ENCODE measurements at regions of chr3 and their contacts with region 1.

Region 1: DNA sequence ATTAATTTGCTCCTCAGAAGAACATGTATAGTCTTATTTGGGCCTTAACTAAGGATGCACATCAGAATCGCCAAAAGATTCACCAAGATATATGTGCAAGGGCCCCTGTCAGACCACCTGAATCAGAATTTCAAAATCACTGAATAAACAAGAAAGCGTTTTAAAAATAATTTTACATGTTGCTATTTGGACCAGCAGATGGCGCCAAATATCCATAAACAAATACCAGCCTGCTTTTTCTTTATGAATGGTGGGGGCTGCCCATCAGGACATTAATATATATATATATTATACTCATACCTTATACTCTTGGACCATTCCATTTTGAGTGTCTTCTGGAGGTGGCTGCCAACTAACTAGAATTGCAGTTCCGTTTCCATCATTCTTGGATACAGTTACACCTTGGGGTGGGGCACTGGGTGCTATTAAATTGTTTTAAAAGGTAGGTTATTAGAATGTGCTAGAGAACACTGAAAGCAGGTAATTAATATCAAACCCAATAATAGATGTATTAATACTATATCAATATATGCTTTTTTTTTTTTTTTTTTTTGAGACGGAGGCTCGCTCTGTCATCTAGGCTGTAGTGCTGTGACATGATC is 1108.3 kb downstream of the ROBO1 start:
- DNase-seq: peak in 4 of 14 experiments; percentile 4 to 31 (median 12)
- ATAC-seq: no peak
- H3K4me3 ChIP-seq: no peak overlapping the region
- H3K4me3 Mint-ChIP-seq: no peak overlapping the region
- H3K27ac ChIP-seq: no peak overlapping the region
- H3K27ac Mint-ChIP-seq: no peak overlapping the region
- H3K4me1 ChIP-seq: no peaks in the 10 kb centered on the region
- H3K4me1 Mint-ChIP-seq: no peaks in the 10 kb centered on the region
- H3K27me3 ChIP-seq: no peaks in the 10 kb centered on the region
- H3K27me3 Mint-ChIP-seq: no peaks in the 10 kb centered on the region
- CTCF ChIP-seq: peak; percentile 69

Region 2: GRCh38 chr3:78507196-78507984 is 152.1 kb before region 1 on chr3:
- CTCF ChIA-PET with region 1: no interaction called
- POLR2A ChIA-PET with region 1: no interaction called
- intact Hi-C with region 1: no loop called
- DNase-seq: no peak
- ATAC-seq: no peak
- H3K4me3 ChIP-seq: no peak overlapping the region
- H3K4me3 Mint-ChIP-seq: no peak overlapping the region
- H3K27ac ChIP-seq: no peak overlapping the region
- H3K27ac Mint-ChIP-seq: no peak overlapping the region
- H3K4me1 ChIP-seq: no peaks in the 10 kb centered on the region
- H3K4me1 Mint-ChIP-seq: no peaks in the 10 kb centered on the region
- H3K27me3 ChIP-seq: no peaks in the 10 kb centered on the region
- H3K27me3 Mint-ChIP-seq: no peaks in the 10 kb centered on the region
- CTCF ChIP-seq: no peak

Region 3: GRCh38 chr3:78670746-78671145 is 11.3 kb after region 1 on chr3:
- CTCF ChIA-PET with region 1: no interaction called
- POLR2A ChIA-PET with region 1: no interaction called
- intact Hi-C with region 1: no loop called
- DNase-seq: no peak
- ATAC-seq: no peak
- H3K4me3 ChIP-seq: no peak overlapping the region
- H3K4me3 Mint-ChIP-seq: no peak overlapping the region
- H3K27ac ChIP-seq: no peak overlapping the region
- H3K27ac Mint-ChIP-seq: no peak overlapping the region
- H3K4me1 ChIP-seq: no peaks in the 10 kb centered on the region
- H3K4me1 Mint-ChIP-seq: no peaks in the 10 kb centered on the region
- H3K27me3 ChIP-seq: no peaks in the 10 kb centered on the region
- H3K27me3 Mint-ChIP-seq: no peaks in the 10 kb centered on the region
- CTCF ChIP-seq: no peak

Region 4: DNA sequence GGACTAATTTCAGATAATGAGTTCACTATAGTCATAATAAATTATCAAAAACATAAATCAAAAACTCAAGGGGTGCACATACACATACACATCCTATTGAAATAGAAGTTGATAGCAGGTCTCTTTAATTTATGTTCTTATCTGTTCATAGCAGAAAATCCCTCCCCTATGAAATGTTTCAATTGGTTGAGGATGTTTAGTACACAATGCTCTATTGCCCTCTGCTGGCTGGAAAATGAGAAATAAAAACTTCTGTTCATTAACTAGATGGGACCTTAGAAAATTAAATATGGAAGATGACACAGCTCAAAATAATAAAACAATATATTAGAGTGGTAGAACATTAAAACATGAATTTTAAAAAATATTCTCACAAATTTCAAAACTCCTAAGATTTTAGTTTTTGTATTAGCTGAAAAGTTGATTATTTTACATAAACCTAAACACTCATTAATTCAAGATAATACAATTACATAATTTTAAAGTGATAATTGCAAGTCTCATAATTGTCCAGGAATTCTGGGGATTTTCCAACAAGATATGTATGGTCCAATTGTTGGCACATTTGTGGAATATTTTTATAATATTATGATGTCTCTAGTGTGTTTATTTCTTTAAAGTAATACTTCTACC is 373.3 kb after region 1 on chr3:
- CTCF ChIA-PET with region 1: no interaction called
- POLR2A ChIA-PET with region 1: no interaction called
- intact Hi-C with region 1: loop called (anchors 5 kb)
- DNase-seq: peak in 1 of 14 experiments; percentile 1
- ATAC-seq: no peak
- H3K4me3 ChIP-seq: no peak overlapping the region
- H3K4me3 Mint-ChIP-seq: no peak overlapping the region
- H3K27ac ChIP-seq: no peak overlapping the region
- H3K27ac Mint-ChIP-seq: no peak overlapping the region
- H3K4me1 ChIP-seq: no peaks in the 10 kb centered on the region
- H3K4me1 Mint-ChIP-seq: no peaks in the 10 kb centered on the region
- H3K27me3 ChIP-seq: no peaks in the 10 kb centered on the region
- H3K27me3 Mint-ChIP-seq: no peaks in the 10 kb centered on the region
- CTCF ChIP-seq: no peak

Region 5: DNA sequence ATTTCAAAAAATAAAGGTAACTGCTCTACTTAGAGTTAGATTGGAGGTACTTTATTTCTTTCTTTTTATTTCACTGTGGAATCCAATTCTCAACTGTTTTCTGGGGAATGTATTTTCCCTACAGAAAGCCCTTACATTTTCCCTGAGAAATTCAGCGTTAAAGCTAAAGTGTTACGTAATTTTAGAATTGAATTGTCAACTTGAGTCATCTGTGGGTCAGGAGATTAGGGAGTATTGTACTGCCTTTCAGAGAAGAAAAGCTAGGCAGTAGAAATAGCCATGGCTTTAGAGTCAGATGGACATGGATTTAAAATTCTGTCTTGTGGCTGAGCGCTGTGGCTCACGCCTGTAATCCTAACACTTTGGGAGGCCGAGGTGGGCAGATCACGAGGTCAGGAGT is 379.7 kb after region 1 on chr3:
- CTCF ChIA-PET with region 1: no interaction called
- POLR2A ChIA-PET with region 1: no interaction called
- intact Hi-C with region 1: loop called (anchors 5 kb)
- DNase-seq: no peak
- ATAC-seq: no peak
- H3K4me3 ChIP-seq: no peak overlapping the region
- H3K4me3 Mint-ChIP-seq: no peak overlapping the region
- H3K27ac ChIP-seq: no peak overlapping the region
- H3K27ac Mint-ChIP-seq: no peak overlapping the region
- H3K4me1 ChIP-seq: no peaks in the 10 kb centered on the region
- H3K4me1 Mint-ChIP-seq: no peaks in the 10 kb centered on the region
- H3K27me3 ChIP-seq: no peaks in the 10 kb centered on the region
- H3K27me3 Mint-ChIP-seq: no peaks in the 10 kb centered on the region
- CTCF ChIP-seq: no peak